IMR-90 (cell line): ENCODE measurements at regions of chr11 and their contacts with region 1.

Region 1: GRCh38 chr11:2097356-2097997 is 41.7 kb downstream of the IGF2 start:
- DNase-seq: peak; percentile 82
- ATAC-seq: peak; percentile 89
- H3K4me3 ChIP-seq: no peak overlapping the region
- H3K27ac ChIP-seq: peak overlapping the region; percentile 88
- H3K4me1 ChIP-seq: peaks cover 25% of the 10 kb centered on the region
- H3K27me3 ChIP-seq: no peaks in the 10 kb centered on the region; the same call in 1 of the 2 replicates
- CTCF ChIP-seq: no peak
- POLR2A ChIP-seq: no peak
- RAD21 ChIP-seq: no peak

Region 2: GRCh38 chr11:1458340-1459218 is 638.9 kb before region 1 on chr11:
- CTCF ChIA-PET with region 1: no interaction called
- POLR2A ChIA-PET with region 1: no interaction called
- dilution Hi-C with region 1: no loop called
- in situ Hi-C with region 1: no loop called
- intact Hi-C with region 1: no loop called
- DNase-seq: peak; percentile 2
- ATAC-seq: peak; percentile 59
- H3K4me3 ChIP-seq: no peak overlapping the region
- H3K27ac ChIP-seq: no peak overlapping the region
- H3K4me1 ChIP-seq: peaks cover 13% of the 10 kb centered on the region; the same call in 1 of the 2 replicates
- H3K27me3 ChIP-seq: no peaks in the 10 kb centered on the region; the same call in 1 of the 2 replicates
- CTCF ChIP-seq: peak; percentile 23; the same call in 1 of the 2 replicates
- POLR2A ChIP-seq: no peak
- RAD21 ChIP-seq: no peak

Region 3: DNA sequence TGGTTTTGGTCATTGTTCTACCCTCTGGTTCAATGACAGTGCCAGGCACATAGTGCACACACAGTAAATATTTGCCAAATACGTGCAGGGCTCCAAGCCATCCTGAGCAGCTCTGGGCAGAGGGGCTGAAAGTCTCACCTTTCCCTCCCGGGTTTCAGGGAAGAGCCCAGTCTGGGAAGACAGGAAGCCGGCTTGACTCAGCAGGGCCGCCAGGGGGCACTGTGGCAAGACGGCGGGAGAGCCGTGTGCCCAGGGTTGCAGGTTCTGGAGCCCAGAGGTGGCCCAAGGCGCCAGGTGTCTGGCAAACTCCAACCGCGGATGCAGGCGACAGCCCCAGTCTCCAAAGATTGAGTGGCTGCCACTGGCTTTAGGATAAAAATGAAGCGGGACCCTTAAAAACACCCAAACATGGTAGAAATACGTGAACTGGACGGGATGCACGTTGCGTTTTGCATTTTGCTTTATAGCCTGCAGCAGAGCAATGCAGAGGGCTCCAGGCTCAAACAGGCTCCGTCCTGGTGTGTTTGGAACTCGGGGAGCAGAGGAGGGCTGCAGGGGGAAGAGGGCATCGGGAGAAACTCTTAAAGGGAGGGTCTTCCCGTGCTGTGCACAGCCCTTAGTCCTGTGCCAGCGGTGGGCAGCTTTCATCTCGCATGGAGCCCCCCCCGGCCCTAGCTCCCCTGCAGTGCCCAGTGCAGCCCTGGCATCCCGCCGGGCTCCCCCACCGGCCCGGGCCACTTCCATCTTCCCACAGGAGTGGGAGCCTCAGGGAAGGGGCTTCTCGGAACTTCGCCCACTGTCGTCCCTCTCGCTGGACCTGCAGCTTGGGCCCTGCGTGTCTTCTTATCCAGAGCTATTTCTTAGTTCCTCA is 457.2 kb before region 1 on chr11:
- CTCF ChIA-PET with region 1: no interaction called
- POLR2A ChIA-PET with region 1: no interaction called
- dilution Hi-C with region 1: no loop called
- in situ Hi-C with region 1: no loop called
- intact Hi-C with region 1: no loop called
- DNase-seq: no peak
- ATAC-seq: peak; percentile 66; the same call in 1 of the 2 replicates
- H3K4me3 ChIP-seq: no peak overlapping the region
- H3K27ac ChIP-seq: no peak overlapping the region
- H3K4me1 ChIP-seq: no peaks in the 10 kb centered on the region
- H3K27me3 ChIP-seq: peaks cover 54% of the 10 kb centered on the region
- CTCF ChIP-seq: peak; percentile 62
- POLR2A ChIP-seq: no peak
- RAD21 ChIP-seq: 0 out of 2 replicates have a peak, but pooled peaks have one; percentile 12

Region 4: GRCh38 chr11:1694064-1694845 is 403.2 kb before region 1 on chr11:
- CTCF ChIA-PET with region 1: no interaction called
- POLR2A ChIA-PET with region 1: no interaction called
- dilution Hi-C with region 1: no loop called
- in situ Hi-C with region 1: no loop called
- intact Hi-C with region 1: no loop called
- DNase-seq: peak; percentile 61
- ATAC-seq: peak; percentile 97
- H3K4me3 ChIP-seq: no peak overlapping the region
- H3K27ac ChIP-seq: no peak overlapping the region
- H3K4me1 ChIP-seq: peaks cover 1% of the 10 kb centered on the region; the same call in 1 of the 2 replicates
- H3K27me3 ChIP-seq: peaks cover 55% of the 10 kb centered on the region
- CTCF ChIP-seq: peak; percentile 94
- POLR2A ChIP-seq: no peak
- RAD21 ChIP-seq: peak; percentile 93

Region 5: GRCh38 chr11:2077061-2077802 is 20.2 kb before region 1 on chr11:
- CTCF ChIA-PET with region 1: no interaction called
- POLR2A ChIA-PET with region 1: no interaction called
- dilution Hi-C with region 1: no loop called
- in situ Hi-C with region 1: no loop called
- intact Hi-C with region 1: loop called (anchors 1 kb)
- DNase-seq: peak; percentile 65
- ATAC-seq: peak; percentile 91
- H3K4me3 ChIP-seq: no peak overlapping the region
- H3K27ac ChIP-seq: no peak overlapping the region; the same call in 1 of the 2 replicates
- H3K4me1 ChIP-seq: peaks cover 6% of the 10 kb centered on the region
- H3K27me3 ChIP-seq: peaks cover 4% of the 10 kb centered on the region; the same call in 1 of the 2 replicates
- CTCF ChIP-seq: no peak
- POLR2A ChIP-seq: no peak
- RAD21 ChIP-seq: no peak

Region 6: DNA sequence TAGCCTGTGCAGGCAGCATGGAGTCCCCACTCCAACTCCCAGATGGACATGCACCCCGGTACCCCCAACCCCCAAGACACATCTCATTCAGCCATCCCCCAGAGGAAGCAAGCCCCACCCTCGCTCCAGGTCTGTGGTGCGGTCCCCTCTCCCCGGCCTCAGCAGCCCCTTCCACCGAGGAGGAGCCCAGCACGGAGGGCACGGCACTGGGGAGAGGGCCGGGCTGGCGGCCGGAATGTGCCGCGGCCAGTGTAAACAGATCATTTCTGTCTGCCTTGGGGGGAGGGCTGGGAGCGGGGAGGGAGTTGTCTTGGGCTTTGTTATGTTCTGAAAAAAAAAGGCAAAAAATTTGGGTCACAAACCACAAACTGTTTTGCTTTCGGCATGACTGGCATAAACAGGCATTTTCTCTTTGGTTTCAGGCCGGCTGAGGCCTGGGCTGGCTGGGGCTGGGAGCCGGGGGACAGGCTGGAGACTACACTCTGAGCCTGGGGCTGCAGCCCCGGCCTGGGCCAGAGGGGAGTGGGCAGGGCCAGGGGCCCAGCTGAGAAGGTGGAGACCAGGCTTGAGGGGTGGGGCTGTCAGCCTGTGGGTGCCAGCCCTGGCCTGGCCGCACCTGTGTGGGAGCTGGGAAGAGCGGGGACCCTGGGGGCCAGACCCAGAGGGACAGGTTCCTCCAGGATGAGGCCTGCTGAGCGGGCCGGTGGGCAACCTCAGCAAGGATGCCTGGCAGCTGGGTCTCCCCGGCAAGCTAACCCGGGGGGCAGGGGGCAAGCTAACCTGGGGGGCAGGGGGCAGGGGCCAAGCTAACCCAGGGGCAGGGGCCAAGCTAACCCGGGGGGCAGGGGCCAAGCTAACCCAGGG is 25.0 kb after region 1 on chr11:
- CTCF ChIA-PET with region 1: no interaction called
- POLR2A ChIA-PET with region 1: no interaction called
- dilution Hi-C with region 1: no loop called
- in situ Hi-C with region 1: no loop called
- intact Hi-C with region 1: loop called (anchors 2 kb)
- DNase-seq: peak; percentile 33
- ATAC-seq: peak; percentile 92
- H3K4me3 ChIP-seq: no peak overlapping the region
- H3K27ac ChIP-seq: peak overlapping the region; percentile 12; the same call in 1 of the 2 replicates
- H3K4me1 ChIP-seq: peaks cover 11% of the 10 kb centered on the region
- H3K27me3 ChIP-seq: peaks cover 13% of the 10 kb centered on the region
- CTCF ChIP-seq: no peak
- POLR2A ChIP-seq: no peak
- RAD21 ChIP-seq: no peak

Region 7: GRCh38 chr11:2137202-2138071 is 40.0 kb after region 1 on chr11:
- CTCF ChIA-PET with region 1: no interaction called
- POLR2A ChIA-PET with region 1: no interaction called
- dilution Hi-C with region 1: no loop called
- in situ Hi-C with region 1: no loop called
- intact Hi-C with region 1: loop called (anchors 5 kb)
- DNase-seq: peak; percentile 48
- ATAC-seq: peak; percentile 81
- H3K4me3 ChIP-seq: peak overlapping the region; percentile 44
- H3K27ac ChIP-seq: no peak overlapping the region
- H3K4me1 ChIP-seq: no peaks in the 10 kb centered on the region; the same call in 1 of the 2 replicates
- H3K27me3 ChIP-seq: peaks cover 66% of the 10 kb centered on the region
- CTCF ChIP-seq: no peak
- POLR2A ChIP-seq: no peak
- RAD21 ChIP-seq: no peak